ENCODE measurements at regions of chr1 and their contacts with region 1.

Region 1: GRCh38 chr1:87024936-87025540 is 110.6 kb downstream of the HS2ST1 start:
- DNase-seq: peak; percentile 56
- H3K4me3 ChIP-seq: no peak overlapping the region
- H3K27ac ChIP-seq: no peak overlapping the region
- H3K4me1 ChIP-seq: peaks cover 23% of the 10 kb centered on the region
- H3K27me3 ChIP-seq: no peaks in the 10 kb centered on the region
- CTCF ChIP-seq: peak; percentile 35 to 46
- POLR2A ChIP-seq: no peak

Region 2: DNA sequence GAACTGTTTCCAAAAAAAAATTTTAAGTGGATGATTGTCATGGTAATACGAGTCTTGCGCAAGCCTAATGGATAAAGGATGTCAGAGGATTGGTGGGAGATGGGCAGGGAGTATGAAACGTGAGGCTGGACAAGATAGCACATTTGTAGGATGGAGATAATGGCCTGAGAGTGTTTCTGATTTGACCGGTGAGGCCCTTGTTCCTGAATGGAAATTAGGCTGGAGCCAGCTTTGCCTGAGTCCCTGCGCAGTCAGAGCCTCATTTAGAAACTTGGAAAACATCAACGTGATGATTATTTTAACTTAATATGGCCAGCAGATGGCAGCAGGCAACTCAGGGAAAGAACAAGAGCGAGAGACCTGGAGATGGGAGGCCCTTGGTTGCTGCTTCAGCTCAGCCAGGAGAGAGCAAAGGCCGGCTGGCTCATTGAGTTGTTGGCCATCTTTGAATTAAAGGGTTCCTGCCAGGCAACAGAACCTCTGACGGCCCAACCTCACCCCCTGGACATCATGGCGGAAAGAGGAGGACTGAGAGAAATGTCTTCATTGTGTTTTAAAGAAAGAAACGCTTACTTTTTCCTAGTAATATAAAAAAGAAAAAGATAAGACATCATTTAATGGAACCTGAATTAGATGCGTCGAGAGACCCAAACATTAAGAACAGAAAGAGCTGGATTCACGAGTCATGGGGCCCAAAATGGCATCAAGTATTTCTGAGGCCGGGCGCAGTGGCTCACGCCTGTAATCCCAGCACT is 191.4 kb before region 1 on chr1:
- CTCF ChIA-PET with region 1: interaction called, 7 read pairs
- POLR2A ChIA-PET with region 1: no interaction called
- dilution Hi-C with region 1: no loop called
- intact Hi-C with region 1: loop called (anchors 5 kb)
- DNase-seq: peak; percentile 75
- H3K4me3 ChIP-seq: no peak overlapping the region
- H3K27ac ChIP-seq: no peak overlapping the region
- H3K4me1 ChIP-seq: no peaks in the 10 kb centered on the region
- H3K27me3 ChIP-seq: no peaks in the 10 kb centered on the region
- CTCF ChIP-seq: peak; percentile 51 to 52
- POLR2A ChIP-seq: no peak

Region 3: DNA sequence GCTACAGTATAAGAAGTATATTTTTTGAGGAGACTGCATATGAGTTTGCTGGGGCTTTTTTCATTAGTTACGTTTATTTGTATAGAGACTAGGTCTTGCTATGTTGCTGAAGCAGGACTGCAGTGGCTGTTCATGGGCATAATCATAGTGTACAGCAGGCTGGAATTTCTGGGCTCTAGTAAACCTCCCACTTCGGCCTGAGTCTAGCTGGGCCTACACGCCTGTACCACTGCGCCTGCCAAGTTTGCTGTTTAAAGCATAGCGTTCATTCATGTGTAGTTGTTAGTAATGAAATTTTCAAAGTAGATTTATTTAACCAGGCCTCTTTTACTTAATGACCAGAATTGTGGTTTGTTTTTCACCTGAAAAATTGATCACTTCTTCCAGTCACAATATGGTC is 76.8 kb before region 1 on chr1:
- CTCF ChIA-PET with region 1: no interaction called
- POLR2A ChIA-PET with region 1: no interaction called
- dilution Hi-C with region 1: no loop called
- intact Hi-C with region 1: no loop called
- DNase-seq: no peak
- H3K4me3 ChIP-seq: no peak overlapping the region
- H3K27ac ChIP-seq: no peak overlapping the region
- H3K4me1 ChIP-seq: no peaks in the 10 kb centered on the region
- H3K27me3 ChIP-seq: no peaks in the 10 kb centered on the region
- CTCF ChIP-seq: no peak
- POLR2A ChIP-seq: no peak

Region 4: DNA sequence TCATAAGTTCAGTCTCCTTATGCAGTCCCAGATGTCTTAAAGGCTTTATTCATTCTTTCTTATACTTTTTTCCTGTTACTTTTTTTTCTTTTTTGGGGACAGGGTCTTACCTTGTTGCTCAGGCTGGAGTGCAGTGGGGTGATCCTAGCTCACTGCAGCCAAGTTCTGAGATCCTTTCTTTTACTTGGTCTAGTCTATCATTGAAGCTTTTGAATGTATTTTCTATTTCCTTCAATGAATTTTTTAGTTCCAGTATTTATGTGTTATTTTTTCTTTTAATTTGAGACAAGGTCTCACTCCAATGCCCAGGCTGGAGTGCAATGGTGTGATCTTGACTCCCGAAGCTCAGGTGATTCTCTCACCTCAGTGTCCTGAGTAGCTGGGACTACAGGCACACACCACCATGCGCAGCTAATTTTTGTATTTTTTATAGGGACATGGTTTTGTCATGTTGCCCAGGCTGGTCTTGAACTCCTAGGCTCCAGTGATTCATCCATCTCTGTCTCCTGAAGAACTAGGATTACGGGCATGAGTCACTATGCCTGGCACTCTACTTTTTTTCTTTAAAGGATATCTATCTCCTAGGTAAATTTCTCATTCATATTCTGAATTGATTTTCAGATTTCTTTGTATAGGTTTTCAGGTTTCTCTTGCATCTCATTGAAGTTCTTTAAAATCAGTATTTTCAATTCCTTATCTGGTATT is 1892.4 kb after region 1 on chr1:
- CTCF ChIA-PET with region 1: no interaction called
- POLR2A ChIA-PET with region 1: interaction called, 11 read pairs
- dilution Hi-C with region 1: no loop called
- intact Hi-C with region 1: no loop called
- DNase-seq: no peak
- H3K4me3 ChIP-seq: no peak overlapping the region
- H3K27ac ChIP-seq: no peak overlapping the region
- H3K4me1 ChIP-seq: no peaks in the 10 kb centered on the region
- H3K27me3 ChIP-seq: no peaks in the 10 kb centered on the region
- CTCF ChIP-seq: no peak
- POLR2A ChIP-seq: no peak